ENCODE measurements at regions of chr11 and their contacts with region 1.

Region 1: DNA sequence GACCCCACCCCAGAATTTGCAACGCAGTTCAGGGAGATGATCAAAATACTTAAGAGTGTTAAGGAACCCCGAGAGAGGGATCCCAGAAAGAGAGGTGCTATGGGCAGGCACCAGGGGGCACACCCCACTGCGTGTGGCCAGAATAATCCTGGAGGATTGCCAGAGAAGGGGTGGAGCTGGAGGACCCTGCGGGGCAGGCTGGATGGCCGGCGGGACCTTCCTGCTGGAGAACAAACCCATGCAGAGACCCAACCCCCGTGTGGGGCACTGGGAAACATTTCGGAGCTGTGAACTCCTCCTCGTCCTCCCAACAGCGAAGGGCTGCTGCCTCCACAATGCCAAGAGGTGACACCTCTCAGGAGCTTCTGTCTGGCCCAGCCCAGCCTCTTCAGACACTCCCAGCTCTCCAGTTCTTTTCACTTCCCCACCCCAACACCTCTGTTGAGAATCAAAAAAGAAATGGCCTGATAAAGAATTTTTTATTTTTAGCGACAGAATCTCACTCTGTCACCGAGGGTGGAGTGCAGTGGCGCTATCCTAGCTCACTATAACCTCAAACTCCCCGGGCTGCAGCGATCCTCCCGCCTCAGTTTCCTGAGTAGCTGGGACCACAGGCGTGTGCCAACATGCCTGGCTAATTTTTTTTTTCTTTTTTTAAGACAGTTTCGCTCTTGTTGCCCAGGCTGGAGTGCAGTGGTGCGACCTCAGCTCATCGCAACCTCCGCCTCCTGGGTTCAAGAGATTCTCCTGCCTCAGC is 25.6 kb downstream of the RHOD start:
- DNase-seq: peak in 3 of 9 experiments; percentile 10 to 53 (median 44)
- ATAC-seq: peak; percentile 15
- H3K4me3 ChIP-seq: no peak overlapping the region
- H3K4me3 Mint-ChIP-seq: peak overlapping the region; percentile 59
- H3K27ac ChIP-seq: no peak overlapping the region
- H3K27ac Mint-ChIP-seq: no peak overlapping the region
- H3K4me1 ChIP-seq: peaks cover 10% of the 10 kb centered on the region
- H3K4me1 Mint-ChIP-seq: peaks cover 13% of the 10 kb centered on the region
- H3K27me3 ChIP-seq: peaks cover 0 to 3% of the 10 kb centered on the region in 2 experiments
- H3K27me3 Mint-ChIP-seq: peaks cover 5% of the 10 kb centered on the region
- CTCF ChIP-seq: no peak

Region 2: DNA sequence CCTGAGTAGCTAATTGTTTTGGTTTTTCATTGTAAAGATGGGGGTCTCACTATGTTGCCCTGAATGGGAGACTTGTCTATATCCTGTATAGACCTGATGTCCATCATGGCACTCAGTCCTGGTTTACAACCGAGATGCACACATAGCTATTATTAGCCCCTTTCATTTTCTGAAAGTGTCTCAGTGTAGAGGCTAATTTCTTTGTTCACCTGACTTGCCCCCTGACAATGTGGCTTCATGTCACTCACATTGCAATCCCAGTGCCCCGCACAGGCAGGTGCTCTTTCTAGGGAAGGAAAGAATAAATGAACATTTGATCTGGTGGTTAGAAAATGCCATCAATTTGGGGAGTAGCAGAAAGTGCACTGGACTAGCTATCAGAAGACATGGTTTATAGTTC is 23.8 kb after region 1 on chr11:
- CTCF ChIA-PET with region 1: interaction called, 13 read pairs
- POLR2A ChIA-PET with region 1: no interaction called
- intact Hi-C with region 1: no loop called
- DNase-seq: no peak
- ATAC-seq: no peak
- H3K4me3 ChIP-seq: no peak overlapping the region
- H3K4me3 Mint-ChIP-seq: no peak overlapping the region
- H3K27ac ChIP-seq: no peak overlapping the region
- H3K27ac Mint-ChIP-seq: peak overlapping the region; percentile 41
- H3K4me1 ChIP-seq: peaks cover 16% of the 10 kb centered on the region
- H3K4me1 Mint-ChIP-seq: peaks cover 25% of the 10 kb centered on the region
- H3K27me3 ChIP-seq: no peaks in the 10 kb centered on the region
- H3K27me3 Mint-ChIP-seq: no peaks in the 10 kb centered on the region
- CTCF ChIP-seq: no peak

Region 3: GRCh38 chr11:67118801-67119584 is 36.8 kb after region 1 on chr11 and contains the start of gene KDM2A:
- CTCF ChIA-PET with region 1: interaction called, 28 read pairs
- POLR2A ChIA-PET with region 1: interaction called, 3 read pairs
- intact Hi-C with region 1: loop called in 1 of 2 experiments (anchors 5 kb)
- DNase-seq: peak; percentile 98 to 100 (median 99)
- ATAC-seq: peak; percentile 81
- H3K4me3 ChIP-seq: peak within 1 kb of the TSS; percentile 62 to 80
- H3K4me3 Mint-ChIP-seq: peak within 1 kb of the TSS; percentile 97
- H3K27ac ChIP-seq: peak within 1 kb of the TSS; percentile 78 to 92
- H3K27ac Mint-ChIP-seq: peak within 1 kb of the TSS; percentile 96
- H3K4me1 ChIP-seq: peaks cover 34% of the 10 kb centered on the region
- H3K4me1 Mint-ChIP-seq: peaks cover 40% of the 10 kb centered on the region
- H3K27me3 ChIP-seq: no peaks in the 10 kb centered on the region
- H3K27me3 Mint-ChIP-seq: no peaks in the 10 kb centered on the region
- CTCF ChIP-seq: no peak
- total RNA-seq, gene KDM2A: 412 to 431 TPM

Region 4: GRCh38 chr11:67167715-67168114 is 85.5 kb after region 1 on chr11:
- CTCF ChIA-PET with region 1: interaction called, 6 read pairs
- POLR2A ChIA-PET with region 1: interaction called, 6 read pairs
- intact Hi-C with region 1: loop called (anchors 1 kb)
- DNase-seq: no peak
- ATAC-seq: no peak
- H3K4me3 ChIP-seq: no peak overlapping the region
- H3K4me3 Mint-ChIP-seq: no peak overlapping the region
- H3K27ac ChIP-seq: no peak overlapping the region
- H3K27ac Mint-ChIP-seq: no peak overlapping the region
- H3K4me1 ChIP-seq: no peaks in the 10 kb centered on the region
- H3K4me1 Mint-ChIP-seq: peaks cover 48% of the 10 kb centered on the region
- H3K27me3 ChIP-seq: no peaks in the 10 kb centered on the region
- H3K27me3 Mint-ChIP-seq: no peaks in the 10 kb centered on the region
- CTCF ChIP-seq: no peak

Region 5: DNA sequence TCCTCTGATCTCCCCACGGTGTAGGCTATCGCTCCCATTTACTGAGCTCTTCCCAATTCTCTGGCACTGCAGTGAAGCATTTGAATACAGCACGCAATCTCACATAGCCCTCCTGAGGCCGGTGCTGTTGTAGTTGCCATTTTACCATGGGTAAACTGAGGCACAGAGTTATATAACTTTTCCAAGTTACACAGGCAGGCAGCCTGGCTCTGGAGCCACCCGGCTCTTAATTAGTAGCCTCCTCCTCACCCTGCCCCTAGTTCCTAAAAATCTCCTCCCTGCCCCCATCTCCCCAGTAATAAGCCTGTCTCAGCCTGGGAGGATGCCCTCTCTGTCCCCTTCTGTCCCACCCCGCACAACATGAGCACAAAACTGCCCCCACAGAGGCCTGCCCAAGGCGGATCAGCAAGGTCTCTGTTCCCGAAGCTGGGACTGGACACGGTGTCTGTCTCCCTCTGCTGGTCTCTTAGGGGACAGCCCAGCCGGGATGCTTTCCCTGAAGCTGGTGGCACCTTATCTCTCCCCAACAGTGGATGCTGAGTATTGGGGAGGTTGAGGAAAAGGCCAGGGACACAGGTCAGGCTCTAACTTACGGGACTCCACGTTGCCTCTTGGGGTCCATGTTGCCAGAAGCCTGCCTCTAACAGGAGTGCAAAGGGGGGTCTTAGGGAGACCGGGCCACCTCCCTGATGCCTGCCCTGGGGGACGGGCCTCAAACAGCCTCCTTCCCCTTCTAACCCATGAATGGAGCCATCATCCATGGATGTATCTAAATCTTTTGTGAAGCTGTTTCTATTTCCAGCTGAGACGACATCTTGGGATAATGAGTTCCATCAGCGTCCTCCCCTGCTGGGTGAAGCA is 300.3 kb after region 1 on chr11:
- CTCF ChIA-PET with region 1: interaction called, 5 read pairs
- POLR2A ChIA-PET with region 1: no interaction called
- intact Hi-C with region 1: loop called in 1 of 2 experiments (anchors 2 kb)
- DNase-seq: peak; percentile 72 to 90 (median 86)
- ATAC-seq: peak; percentile 98
- H3K4me3 ChIP-seq: no peak overlapping the region
- H3K4me3 Mint-ChIP-seq: no peak overlapping the region
- H3K27ac ChIP-seq: no peak overlapping the region
- H3K27ac Mint-ChIP-seq: no peak overlapping the region
- H3K4me1 ChIP-seq: peaks cover 5% of the 10 kb centered on the region
- H3K4me1 Mint-ChIP-seq: peaks cover 5% of the 10 kb centered on the region
- H3K27me3 ChIP-seq: no peaks in the 10 kb centered on the region
- H3K27me3 Mint-ChIP-seq: no peaks in the 10 kb centered on the region
- CTCF ChIP-seq: peak; percentile 90